Left colon (tissue), 2 donors: ENCODE measurements at regions of chr7 and their contacts with region 1.

Region 1: GRCh38 chr7:4641667-4642467 is 40.2 kb upstream of the FOXK1 start:
- DNase-seq: peak; percentile 90 to 97
- ATAC-seq: peak; percentile 97

Region 2: GRCh38 chr7:4436361-4436895 is 205.4 kb before region 1 on chr7:
- intact Hi-C with region 1: no loop called
- DNase-seq: no peak
- ATAC-seq: no peak

Region 3: GRCh38 chr7:4610768-4611467 is 30.9 kb before region 1 on chr7:
- intact Hi-C with region 1: no loop called
- DNase-seq: peak in 1 of 2 donors; percentile 30
- ATAC-seq: peak; percentile 93

Region 4: GRCh38 chr7:4681886-4682620 is 40.2 kb after region 1 on chr7 and contains the start of gene FOXK1:
- intact Hi-C with region 1: loop called in 1 of 2 experiments (anchors 5 kb)
- DNase-seq: peak; percentile 66 to 84
- ATAC-seq: peak; percentile 73
- total RNA-seq, gene FOXK1: 19.9 to 28.3 TPM

Region 5: GRCh38 chr7:4689668-4690067 is 47.8 kb after region 1 on chr7:
- intact Hi-C with region 1: loop called (anchors 5 to 10 kb)
- DNase-seq: no peak
- ATAC-seq: no peak